CD8-positive, alpha-beta T cell (primary cell): ENCODE measurements at regions of chr12 and their contacts with region 1.

Region 1: GRCh38 chr12:121811434-121812319 is 7.9 kb downstream of the SETD1B start:
- DNase-seq: peak; percentile 51 to 86 (median 68)
- ATAC-seq: peak; percentile 70
- H3K4me3 ChIP-seq: peak overlapping the region; percentile 52 to 74
- H3K4me3 Mint-ChIP-seq: peak overlapping the region; percentile 83
- H3K27ac ChIP-seq: peak overlapping the region in 1 of 2 experiments; percentile 40
- H3K27ac Mint-ChIP-seq: peak overlapping the region; percentile 89
- H3K4me1 ChIP-seq: peaks cover 50% of the 10 kb centered on the region
- H3K4me1 Mint-ChIP-seq: peaks cover 57% of the 10 kb centered on the region
- H3K27me3 ChIP-seq: no peaks in the 10 kb centered on the region
- H3K27me3 Mint-ChIP-seq: no peaks in the 10 kb centered on the region
- CTCF ChIP-seq: peak; percentile 96

Region 2: GRCh38 chr12:121499929-121500793 is 311.5 kb before region 1 on chr12:
- CTCF ChIA-PET with region 1: no interaction called
- POLR2A ChIA-PET with region 1: no interaction called
- intact Hi-C with region 1: no loop called
- DNase-seq: peak; percentile 55 to 88 (median 76)
- ATAC-seq: peak; percentile 80
- H3K4me3 ChIP-seq: no peak overlapping the region
- H3K4me3 Mint-ChIP-seq: no peak overlapping the region
- H3K27ac ChIP-seq: no peak overlapping the region
- H3K27ac Mint-ChIP-seq: no peak overlapping the region
- H3K4me1 ChIP-seq: peaks cover 13% of the 10 kb centered on the region
- H3K4me1 Mint-ChIP-seq: peaks cover 12% of the 10 kb centered on the region
- H3K27me3 ChIP-seq: no peaks in the 10 kb centered on the region
- H3K27me3 Mint-ChIP-seq: no peaks in the 10 kb centered on the region
- CTCF ChIP-seq: peak; percentile 97

Region 3: GRCh38 chr12:121697098-121697698 is 114.5 kb before region 1 on chr12:
- CTCF ChIA-PET with region 1: interaction called, 5 read pairs
- POLR2A ChIA-PET with region 1: no interaction called
- intact Hi-C with region 1: loop called in 1 of 2 experiments (anchors 2 kb)
- DNase-seq: peak in 4 of 9 experiments; percentile 18 to 76 (median 59)
- ATAC-seq: peak; percentile 51
- H3K4me3 ChIP-seq: no peak overlapping the region
- H3K4me3 Mint-ChIP-seq: no peak overlapping the region
- H3K27ac ChIP-seq: no peak overlapping the region
- H3K27ac Mint-ChIP-seq: no peak overlapping the region
- H3K4me1 ChIP-seq: no peaks in the 10 kb centered on the region
- H3K4me1 Mint-ChIP-seq: peaks cover 2% of the 10 kb centered on the region
- H3K27me3 ChIP-seq: no peaks in the 10 kb centered on the region
- H3K27me3 Mint-ChIP-seq: no peaks in the 10 kb centered on the region
- CTCF ChIP-seq: peak; percentile 68

Region 4: GRCh38 chr12:121773011-121773777 is 38.5 kb before region 1 on chr12:
- CTCF ChIA-PET with region 1: interaction called, 2,042 read pairs
- POLR2A ChIA-PET with region 1: interaction called, 1,016 read pairs
- intact Hi-C with region 1: loop called (anchors 1 kb)
- DNase-seq: peak; percentile 63 to 88 (median 80)
- ATAC-seq: peak; percentile 90
- H3K4me3 ChIP-seq: no peak overlapping the region
- H3K4me3 Mint-ChIP-seq: no peak overlapping the region
- H3K27ac ChIP-seq: peak overlapping the region in 1 of 2 experiments; percentile 32
- H3K27ac Mint-ChIP-seq: peak overlapping the region; percentile 57
- H3K4me1 ChIP-seq: peaks cover 29% of the 10 kb centered on the region
- H3K4me1 Mint-ChIP-seq: peaks cover 16% of the 10 kb centered on the region
- H3K27me3 ChIP-seq: no peaks in the 10 kb centered on the region
- H3K27me3 Mint-ChIP-seq: no peaks in the 10 kb centered on the region
- CTCF ChIP-seq: peak; percentile 82

Region 5: DNA sequence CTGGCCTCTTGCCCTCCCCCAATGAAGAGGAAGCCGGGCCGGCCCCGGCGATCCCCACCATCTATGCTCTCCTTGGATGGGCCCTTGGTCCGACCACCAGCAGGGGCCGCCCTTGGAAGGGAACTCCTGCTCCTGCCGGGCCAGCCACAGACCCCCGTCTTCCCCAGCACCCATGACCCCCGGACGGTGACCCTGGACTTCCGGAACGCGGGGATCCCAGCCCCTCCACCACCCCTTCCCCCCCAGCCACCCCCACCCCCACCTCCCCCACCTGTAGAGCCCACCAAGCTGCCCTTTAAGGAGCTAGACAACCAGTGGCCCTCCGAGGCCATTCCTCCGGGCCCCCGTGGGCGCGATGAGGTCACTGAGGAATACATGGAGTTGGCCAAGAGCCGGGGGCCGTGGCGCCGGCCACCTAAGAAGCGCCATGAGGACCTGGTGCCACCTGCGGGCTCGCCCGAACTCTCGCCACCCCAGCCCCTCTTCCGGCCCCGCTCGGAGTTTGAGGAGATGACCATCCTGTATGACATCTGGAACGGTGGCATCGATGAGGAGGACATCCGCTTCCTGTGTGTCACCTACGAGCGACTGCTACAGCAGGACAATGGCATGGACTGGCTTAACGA is 11.5 kb after region 1 on chr12:
- CTCF ChIA-PET with region 1: interaction called, 24 read pairs
- POLR2A ChIA-PET with region 1: interaction called, 8 read pairs
- intact Hi-C with region 1: no loop called
- DNase-seq: peak in 1 of 9 experiments; percentile 29
- ATAC-seq: no peak
- H3K4me3 ChIP-seq: no peak overlapping the region
- H3K4me3 Mint-ChIP-seq: no peak overlapping the region
- H3K27ac ChIP-seq: no peak overlapping the region
- H3K27ac Mint-ChIP-seq: no peak overlapping the region
- H3K4me1 ChIP-seq: no peaks in the 10 kb centered on the region
- H3K4me1 Mint-ChIP-seq: no peaks in the 10 kb centered on the region
- H3K27me3 ChIP-seq: no peaks in the 10 kb centered on the region
- H3K27me3 Mint-ChIP-seq: no peaks in the 10 kb centered on the region
- CTCF ChIP-seq: no peak

Region 6: GRCh38 chr12:121955258-121956235 is 143.9 kb after region 1 on chr12:
- CTCF ChIA-PET with region 1: no interaction called
- POLR2A ChIA-PET with region 1: no interaction called
- intact Hi-C with region 1: no loop called
- DNase-seq: no peak
- ATAC-seq: no peak
- H3K4me3 ChIP-seq: no peak overlapping the region
- H3K4me3 Mint-ChIP-seq: no peak overlapping the region
- H3K27ac ChIP-seq: no peak overlapping the region
- H3K27ac Mint-ChIP-seq: no peak overlapping the region
- H3K4me1 ChIP-seq: no peaks in the 10 kb centered on the region
- H3K4me1 Mint-ChIP-seq: no peaks in the 10 kb centered on the region
- H3K27me3 ChIP-seq: no peaks in the 10 kb centered on the region
- H3K27me3 Mint-ChIP-seq: peaks cover 2% of the 10 kb centered on the region
- CTCF ChIP-seq: no peak